ENCODE measurements at regions of chr1 and their contacts with region 1.

Region 1: DNA sequence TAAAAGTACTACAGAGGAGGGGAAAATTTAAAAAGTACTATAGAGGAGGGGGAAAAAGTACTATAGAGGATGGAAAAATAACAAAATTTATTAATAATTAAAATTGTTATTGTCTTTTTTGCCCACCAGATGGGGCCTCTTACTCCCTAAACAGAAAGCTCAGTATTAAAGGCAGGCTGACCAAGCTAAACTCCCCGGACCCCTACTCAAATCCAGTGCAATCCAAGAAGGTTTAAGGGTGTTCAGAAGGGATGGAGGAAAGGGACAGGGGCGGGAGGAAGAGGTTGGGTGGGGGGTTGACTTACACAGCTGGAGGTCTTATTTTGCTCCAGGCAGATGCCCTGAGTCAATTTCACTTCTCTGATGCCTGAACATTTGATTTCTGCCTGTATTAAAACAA is 13.7 kb downstream of the CD34 start:
- DNase-seq: no peak
- CTCF ChIP-seq: no peak

Region 2: DNA sequence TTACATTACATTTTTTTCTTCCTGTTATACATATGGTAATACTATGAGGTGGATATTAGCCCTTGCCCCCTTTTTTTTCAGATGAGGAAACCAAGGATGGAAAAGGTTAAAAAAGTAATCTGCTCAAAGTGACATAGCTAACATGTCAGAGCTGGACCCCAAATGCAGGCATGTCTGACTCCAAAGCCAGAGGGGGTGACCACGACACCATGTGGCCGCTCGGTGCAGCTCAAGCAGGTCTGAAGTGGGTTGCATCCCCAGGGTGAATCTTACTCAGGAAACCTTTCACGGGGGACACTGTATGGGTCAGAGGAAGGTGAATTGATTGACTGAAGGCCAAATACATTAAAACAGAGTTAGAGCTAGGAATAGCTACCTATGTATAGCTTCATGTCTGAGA is 21.1 kb before region 1 on chr1:
- CTCF ChIA-PET with region 1: interaction called, 181 read pairs
- POLR2A ChIA-PET with region 1: no interaction called
- DNase-seq: no peak
- CTCF ChIP-seq: peak; percentile 38

Region 3: GRCh38 chr1:207910591-207911354 is 13.6 kb after region 1 on chr1 and contains the start of gene CD34:
- CTCF ChIA-PET with region 1: interaction called, 27 read pairs
- POLR2A ChIA-PET with region 1: no interaction called
- DNase-seq: no peak
- CTCF ChIP-seq: no peak

Region 4: DNA sequence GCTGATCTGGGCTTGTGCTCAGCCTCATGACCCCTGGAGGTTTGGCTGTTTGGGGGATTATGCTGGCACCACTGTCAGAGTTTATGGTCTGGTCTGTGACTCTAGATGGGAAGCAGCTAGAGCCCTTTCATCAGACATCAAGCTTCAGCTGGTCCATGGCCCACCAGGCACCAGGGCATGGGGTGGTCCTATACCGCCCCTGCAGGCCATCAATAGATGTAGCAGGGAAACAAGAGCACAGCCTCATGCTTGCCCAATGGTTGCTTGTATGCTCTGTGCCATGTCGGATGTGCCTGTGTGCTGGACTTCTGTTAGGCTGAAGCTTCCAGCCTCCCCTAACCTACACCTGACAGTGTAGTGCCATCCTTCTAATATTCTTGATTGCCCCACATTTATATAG is 84.8 kb after region 1 on chr1:
- CTCF ChIA-PET with region 1: interaction called, 15 read pairs
- POLR2A ChIA-PET with region 1: no interaction called
- DNase-seq: peak; percentile 36
- CTCF ChIP-seq: peak; percentile 52

Region 5: DNA sequence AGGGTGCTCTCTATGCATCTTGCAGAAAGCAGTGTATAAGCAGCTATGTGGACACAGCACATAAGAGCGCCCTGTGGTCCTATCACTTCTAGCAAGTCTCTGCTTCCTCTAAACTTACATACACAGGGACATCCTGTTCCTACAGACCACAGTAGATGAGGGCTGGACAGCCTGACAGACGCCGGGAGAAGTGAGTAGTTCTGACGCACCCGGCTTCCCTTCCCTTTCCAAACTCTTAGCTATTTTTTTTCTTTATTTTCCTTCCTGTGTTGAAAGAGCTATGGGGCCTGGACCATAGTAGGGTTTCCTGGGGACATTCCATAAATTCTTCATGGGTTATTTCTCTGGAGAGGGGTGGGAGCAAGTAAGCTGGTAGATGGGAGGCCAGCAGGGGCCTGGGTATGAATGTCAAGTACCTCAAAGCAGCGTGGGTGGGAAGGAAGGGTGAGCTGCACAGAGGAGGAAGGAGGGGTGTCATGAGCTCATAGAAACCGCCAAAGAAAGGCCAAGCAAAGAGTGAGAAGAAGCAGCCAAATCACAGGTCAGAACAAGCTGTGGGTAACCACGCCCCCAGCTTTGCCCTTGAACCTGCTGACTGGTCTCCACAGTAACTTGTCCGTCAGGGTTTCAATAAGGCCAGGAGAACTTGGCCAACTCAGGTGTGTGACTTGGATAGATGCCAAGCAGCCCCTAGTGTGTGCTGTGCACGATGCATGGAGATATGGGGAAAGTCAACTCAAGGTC is 310.4 kb after region 1 on chr1:
- CTCF ChIA-PET with region 1: no interaction called
- POLR2A ChIA-PET with region 1: no interaction called
- DNase-seq: no peak
- CTCF ChIP-seq: no peak

Measured in GM10248 (cell line).